ENCODE measurements at regions of chr10 and their contacts with region 1.

Region 1: DNA sequence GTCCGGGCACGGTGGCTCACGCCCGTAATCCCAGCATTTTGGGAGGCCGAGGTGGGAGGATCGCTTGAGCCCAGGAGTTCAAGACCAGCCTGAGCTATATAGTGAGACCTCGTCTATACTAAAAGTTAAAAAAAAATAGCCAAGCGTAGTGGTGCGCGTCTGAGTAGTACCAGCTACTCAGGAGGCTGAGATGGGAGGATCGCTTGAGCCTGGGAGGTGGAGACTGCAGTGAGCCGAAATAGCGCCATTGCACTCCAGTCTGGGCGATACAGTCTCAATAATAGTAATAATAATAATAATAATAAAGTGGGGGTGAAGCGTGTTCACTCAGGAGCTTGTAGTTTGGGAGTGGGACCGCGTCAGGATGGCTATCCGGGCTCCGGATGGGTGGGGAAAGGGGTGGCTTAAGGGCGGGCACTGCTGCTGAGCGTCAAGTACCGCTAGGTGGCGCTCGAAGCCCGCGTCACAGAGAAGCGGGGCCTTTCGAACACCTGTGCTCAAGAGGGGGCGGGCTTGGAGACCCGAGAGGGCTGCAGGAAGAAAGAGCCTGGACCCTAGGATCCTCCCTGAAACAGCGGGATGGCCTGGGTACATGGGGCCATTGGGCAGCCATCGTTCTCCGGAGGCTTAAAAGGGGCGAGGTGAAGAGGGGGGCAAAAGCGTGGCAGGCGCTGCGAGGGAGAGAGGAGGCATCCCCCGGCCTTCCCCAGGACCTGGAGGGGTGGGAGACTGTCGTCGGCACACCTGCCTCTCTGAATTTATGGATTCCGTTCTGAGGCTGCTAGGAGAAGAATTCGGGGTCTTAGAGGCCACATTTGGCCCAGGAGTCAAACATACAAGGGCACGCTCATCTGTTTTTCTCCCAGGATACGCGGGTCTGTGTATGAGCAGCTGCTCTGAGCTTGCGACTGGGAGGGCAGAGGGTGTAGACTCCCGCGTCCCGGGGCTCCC is 14.5 kb downstream of the LBX1 start:
- DNase-seq: peak; percentile 10
- H3K4me3 ChIP-seq: no peak overlapping the region
- H3K27ac ChIP-seq: no peak overlapping the region
- H3K27me3 ChIP-seq: peaks cover 76% of the 10 kb centered on the region
- CTCF ChIP-seq: peak; percentile 92

Region 2: GRCh38 chr10:100697070-100697469 is 517.7 kb before region 1 on chr10:
- CTCF ChIA-PET with region 1: no interaction called
- POLR2A ChIA-PET with region 1: no interaction called
- DNase-seq: no peak
- H3K4me3 ChIP-seq: no peak overlapping the region
- H3K27ac ChIP-seq: no peak overlapping the region
- H3K27me3 ChIP-seq: peaks cover 7% of the 10 kb centered on the region
- CTCF ChIP-seq: no peak

Region 3: GRCh38 chr10:101136007-101136707 is 78.6 kb before region 1 on chr10:
- CTCF ChIA-PET with region 1: no interaction called
- POLR2A ChIA-PET with region 1: no interaction called
- DNase-seq: no peak
- H3K4me3 ChIP-seq: no peak overlapping the region
- H3K27ac ChIP-seq: no peak overlapping the region
- H3K27me3 ChIP-seq: peaks cover 96% of the 10 kb centered on the region
- CTCF ChIP-seq: no peak

Region 4: GRCh38 chr10:101236376-101237080 is 21.8 kb after region 1 on chr10:
- CTCF ChIA-PET with region 1: interaction called, 10 read pairs
- POLR2A ChIA-PET with region 1: no interaction called
- DNase-seq: no peak
- H3K4me3 ChIP-seq: 0 out of 2 replicates have a peak overlapping the region, but pooled peaks have one; percentile 25
- H3K27ac ChIP-seq: peak overlapping the region; percentile 31
- H3K27me3 ChIP-seq: peaks cover 84% of the 10 kb centered on the region
- CTCF ChIP-seq: no peak

Region 5: DNA sequence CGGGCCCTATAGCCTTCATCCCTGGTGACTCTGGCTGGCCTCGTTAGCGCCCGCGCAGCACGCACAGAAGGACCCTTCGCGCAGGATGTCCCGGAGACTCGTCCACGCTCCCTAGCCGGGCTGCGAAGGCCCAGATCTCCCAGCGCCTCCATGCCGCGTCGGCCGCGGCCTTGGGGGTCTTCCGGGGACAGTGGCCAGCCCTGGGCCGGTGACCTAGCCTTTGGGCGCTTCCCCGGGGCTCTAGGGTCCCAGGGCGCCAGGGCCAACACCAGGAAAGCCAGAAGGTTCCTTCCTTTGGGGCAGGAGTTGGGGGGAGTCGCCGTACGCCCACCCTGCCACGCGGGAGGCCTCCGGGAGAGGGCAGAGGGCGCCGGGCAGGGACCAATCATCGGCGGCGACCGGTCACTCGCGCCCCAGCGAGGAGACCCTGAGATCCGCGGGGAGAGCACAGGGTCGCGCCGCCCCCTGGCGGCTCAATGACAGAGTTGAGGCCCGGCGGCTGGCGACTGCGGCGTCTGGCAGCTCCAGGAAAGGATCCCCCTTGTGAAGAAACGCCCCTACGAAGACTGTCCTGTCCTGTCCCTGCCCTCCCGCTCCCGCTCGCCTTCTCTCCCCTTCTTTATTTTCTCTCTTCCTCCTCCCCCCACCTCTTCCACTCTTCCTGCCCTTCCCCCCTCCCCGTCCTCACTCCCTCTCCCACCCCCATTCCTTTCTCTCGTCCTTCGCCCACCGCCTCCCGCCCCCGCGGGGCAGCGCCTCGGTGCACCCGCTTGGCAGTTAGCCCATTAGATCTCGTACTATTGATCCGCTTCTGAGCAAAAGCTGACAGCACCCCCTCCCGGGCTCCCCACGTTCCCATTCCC is 76.8 kb after region 1 on chr10:
- CTCF ChIA-PET with region 1: interaction called, 79 read pairs
- POLR2A ChIA-PET with region 1: interaction called, 3 read pairs
- DNase-seq: no peak
- H3K4me3 ChIP-seq: peak overlapping the region; percentile 48
- H3K27ac ChIP-seq: no peak overlapping the region
- H3K27me3 ChIP-seq: peaks cover 77% of the 10 kb centered on the region
- CTCF ChIP-seq: peak; percentile 62

Region 6: DNA sequence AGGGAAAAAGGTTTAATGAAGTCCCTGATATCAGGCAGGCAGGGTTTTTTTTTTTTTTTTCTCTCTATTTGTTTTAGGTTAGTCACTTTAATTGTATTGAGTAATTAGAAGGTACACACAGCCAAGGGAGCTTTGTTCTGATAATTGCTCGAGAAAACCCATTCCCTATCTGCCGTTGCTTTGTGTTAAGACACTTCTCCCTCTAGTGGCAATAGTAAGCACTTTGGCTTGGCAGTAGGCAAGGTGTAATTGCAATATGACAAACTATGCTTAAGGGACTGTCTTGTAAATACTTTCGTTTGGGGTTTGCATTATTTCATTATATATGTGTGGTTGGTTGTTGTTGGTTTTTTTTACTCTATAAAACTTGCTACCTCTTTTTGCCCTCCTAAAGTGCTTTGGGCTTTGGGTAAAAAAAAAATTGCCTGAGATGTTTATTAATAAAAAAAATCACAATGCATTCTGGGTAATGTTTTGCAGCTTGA is 252.6 kb after region 1 on chr10:
- CTCF ChIA-PET with region 1: interaction called, 57 read pairs
- POLR2A ChIA-PET with region 1: no interaction called
- DNase-seq: peak; percentile 34
- H3K4me3 ChIP-seq: no peak overlapping the region
- H3K27ac ChIP-seq: no peak overlapping the region
- H3K27me3 ChIP-seq: no peaks in the 10 kb centered on the region
- CTCF ChIP-seq: peak; percentile 94

Region 7: DNA sequence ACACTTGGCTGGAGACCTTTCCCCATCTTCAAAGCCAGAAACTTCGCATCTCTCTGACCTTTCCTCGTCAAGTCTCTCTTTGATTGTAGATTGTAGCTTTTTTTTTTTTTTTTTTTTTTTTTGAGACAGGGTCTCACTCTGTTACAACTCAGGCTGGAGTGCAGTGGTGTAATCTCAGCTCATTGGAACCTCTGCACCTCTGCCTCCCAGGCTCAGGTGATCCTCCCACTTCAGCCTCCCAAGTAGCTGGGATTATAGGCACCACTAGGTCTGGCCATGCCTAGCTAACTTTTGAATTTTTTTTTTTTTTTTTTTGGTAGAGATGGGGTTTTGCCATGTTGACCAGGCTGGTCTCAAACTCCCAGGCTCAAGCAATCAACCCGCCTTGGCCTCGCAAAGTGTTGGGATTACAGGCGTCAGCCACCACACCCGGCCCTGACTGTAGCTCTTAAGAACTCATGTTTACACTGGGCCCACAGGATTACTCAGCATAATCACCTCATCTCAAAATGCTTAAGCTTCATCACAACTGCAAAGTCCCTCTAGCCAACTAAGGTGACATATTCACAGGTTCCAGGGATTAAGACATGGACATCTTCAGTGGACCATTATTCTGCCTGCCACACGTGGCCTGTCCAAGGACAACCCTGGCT is 361.6 kb after region 1 on chr10:
- CTCF ChIA-PET with region 1: interaction called, 132 read pairs
- POLR2A ChIA-PET with region 1: no interaction called
- DNase-seq: no peak
- H3K4me3 ChIP-seq: no peak overlapping the region
- H3K27ac ChIP-seq: no peak overlapping the region
- H3K27me3 ChIP-seq: no peaks in the 10 kb centered on the region
- CTCF ChIP-seq: no peak

Region 8: DNA sequence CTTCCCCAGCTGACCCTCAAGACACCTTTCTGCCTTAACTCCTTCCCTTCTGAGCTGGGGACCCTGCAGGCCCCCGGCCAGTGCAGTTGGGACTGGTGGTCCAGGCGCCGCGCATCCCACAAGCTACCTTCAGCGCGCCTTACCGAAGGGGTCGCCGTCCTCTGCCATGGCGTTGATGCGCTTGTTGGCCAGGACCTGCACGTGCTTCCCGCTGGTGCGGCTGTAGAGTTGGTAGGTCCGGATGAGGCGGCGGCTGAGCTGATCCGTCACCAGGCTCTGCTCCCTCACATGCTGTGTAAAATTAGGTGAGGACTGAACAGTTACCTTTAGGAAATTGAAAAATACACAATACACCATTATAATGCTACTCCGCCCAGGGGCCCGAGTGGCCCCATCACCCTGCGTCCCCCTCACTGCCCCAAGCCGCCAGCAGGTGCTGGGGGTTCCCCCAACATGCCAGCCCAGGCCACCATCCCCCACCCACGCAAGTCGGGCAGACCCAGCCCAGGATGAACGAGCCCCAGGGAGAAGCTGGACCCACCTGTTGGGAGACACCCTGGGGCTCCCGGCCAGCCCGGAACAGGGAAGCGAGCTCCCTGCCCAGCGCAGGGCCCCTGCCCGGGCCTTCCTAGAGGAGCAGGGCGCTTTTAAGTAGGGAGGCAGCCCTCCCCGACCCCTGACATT is 560.0 kb after region 1 on chr10:
- CTCF ChIA-PET with region 1: interaction called, 16 read pairs
- POLR2A ChIA-PET with region 1: no interaction called
- DNase-seq: no peak
- H3K4me3 ChIP-seq: no peak overlapping the region
- H3K27ac ChIP-seq: no peak overlapping the region
- H3K27me3 ChIP-seq: peaks cover 70% of the 10 kb centered on the region
- CTCF ChIP-seq: no peak